CD4-positive, alpha-beta memory T cell (primary cell): ENCODE measurements at regions of chr18 and their contacts with region 1.

Region 1: DNA sequence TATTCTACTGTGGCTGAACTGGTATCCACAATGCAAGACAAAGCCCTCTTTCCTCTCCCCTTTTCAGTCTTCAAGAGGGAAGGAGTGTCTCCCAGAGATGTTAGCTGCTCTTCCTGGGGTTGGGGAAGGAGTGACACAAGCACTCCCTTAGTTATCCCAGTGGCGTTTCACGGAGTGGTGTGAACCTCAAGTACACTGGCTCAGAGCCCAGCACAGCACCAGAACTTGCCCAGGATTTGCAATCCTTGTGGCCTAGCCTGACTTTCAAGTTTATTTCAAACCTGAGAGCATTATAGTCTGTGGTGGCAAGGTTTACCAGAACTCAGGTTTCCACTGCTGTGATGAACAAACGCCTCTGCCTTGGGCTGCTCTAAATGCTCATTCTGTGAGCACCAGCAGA is 162.5 kb downstream of the CCDC102B start:
- DNase-seq: no peak
- H3K4me3 ChIP-seq: no peak overlapping the region
- H3K4me3 Mint-ChIP-seq: no peak overlapping the region
- H3K27ac ChIP-seq: no peak overlapping the region
- H3K27ac Mint-ChIP-seq: no peak overlapping the region
- H3K4me1 ChIP-seq: no peaks in the 10 kb centered on the region
- H3K4me1 Mint-ChIP-seq: no peaks in the 10 kb centered on the region
- H3K27me3 ChIP-seq: no peaks in the 10 kb centered on the region
- H3K27me3 Mint-ChIP-seq: no peaks in the 10 kb centered on the region

Region 2: GRCh38 chr18:68972176-68972575 is 11.8 kb after region 1 on chr18:
- CTCF ChIA-PET with region 1: no interaction called
- POLR2A ChIA-PET with region 1: no interaction called
- intact Hi-C with region 1: no loop called
- DNase-seq: no peak
- H3K4me3 ChIP-seq: no peak overlapping the region
- H3K4me3 Mint-ChIP-seq: no peak overlapping the region
- H3K27ac ChIP-seq: no peak overlapping the region
- H3K27ac Mint-ChIP-seq: no peak overlapping the region
- H3K4me1 ChIP-seq: no peaks in the 10 kb centered on the region
- H3K4me1 Mint-ChIP-seq: no peaks in the 10 kb centered on the region
- H3K27me3 ChIP-seq: no peaks in the 10 kb centered on the region
- H3K27me3 Mint-ChIP-seq: no peaks in the 10 kb centered on the region

Region 3: DNA sequence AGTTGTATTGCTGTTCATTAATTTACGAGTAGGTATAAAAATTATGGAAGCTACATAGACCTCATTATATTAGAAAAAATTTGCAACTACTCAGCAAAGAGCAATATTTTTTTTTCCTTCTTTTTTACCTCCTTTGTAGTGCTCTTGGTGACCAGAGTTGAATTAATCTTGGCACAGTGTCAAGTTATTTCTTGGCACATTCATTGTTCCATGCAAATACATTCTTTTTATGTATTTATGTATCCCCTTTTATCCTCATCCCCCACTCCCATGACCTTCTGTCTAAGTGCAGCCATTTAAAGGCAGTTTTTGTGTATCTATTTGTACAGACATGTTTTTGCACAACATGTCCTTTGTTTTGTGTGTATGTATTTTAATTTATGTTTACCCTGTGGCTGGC is 62.1 kb after region 1 on chr18:
- CTCF ChIA-PET with region 1: no interaction called
- POLR2A ChIA-PET with region 1: no interaction called
- intact Hi-C with region 1: loop called (anchors 10 kb)
- DNase-seq: no peak
- H3K4me3 ChIP-seq: no peak overlapping the region
- H3K4me3 Mint-ChIP-seq: no peak overlapping the region
- H3K27ac ChIP-seq: no peak overlapping the region
- H3K27ac Mint-ChIP-seq: no peak overlapping the region
- H3K4me1 ChIP-seq: no peaks in the 10 kb centered on the region
- H3K4me1 Mint-ChIP-seq: no peaks in the 10 kb centered on the region
- H3K27me3 ChIP-seq: no peaks in the 10 kb centered on the region
- H3K27me3 Mint-ChIP-seq: no peaks in the 10 kb centered on the region